Caco-2 (cell line): ENCODE measurements at regions of chr1 and their contacts with region 1.

Region 1: GRCh38 chr1:21200767-21201166 is 24.1 kb upstream of the EIF4G3 start:
- DNase-seq: no peak
- H3K4me3 ChIP-seq: no peak overlapping the region
- H3K4me3 Mint-ChIP-seq: no peak overlapping the region
- H3K27ac Mint-ChIP-seq: no peak overlapping the region
- H3K4me1 ChIP-seq: no peaks in the 10 kb centered on the region
- H3K4me1 Mint-ChIP-seq: no peaks in the 10 kb centered on the region
- H3K27me3 ChIP-seq: no peaks in the 10 kb centered on the region
- H3K27me3 Mint-ChIP-seq: no peaks in the 10 kb centered on the region
- CTCF ChIP-seq: no peak

Region 2: DNA sequence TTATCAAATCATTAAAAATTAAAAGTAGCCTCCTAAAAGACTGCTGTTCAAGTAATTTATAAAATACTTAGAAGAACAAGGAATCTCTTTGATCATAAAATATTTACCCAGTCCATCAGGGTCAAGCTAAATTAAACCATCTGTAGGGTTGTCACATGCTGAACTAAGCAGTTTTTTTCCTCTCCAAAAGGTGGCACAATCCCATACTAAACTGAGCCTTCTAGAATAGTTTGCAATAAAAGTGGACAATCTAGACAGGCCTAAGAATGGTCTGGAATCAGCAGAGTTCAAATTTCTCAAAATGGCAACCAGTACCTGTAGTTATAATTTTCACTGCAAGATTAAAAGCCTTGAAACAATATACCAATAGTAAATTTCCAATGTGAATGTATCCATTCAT is 218.9 kb before region 1 on chr1:
- CTCF ChIA-PET with region 1: interaction called, 4 read pairs
- POLR2A ChIA-PET with region 1: no interaction called
- intact Hi-C with region 1: loop called (anchors 1 kb)
- DNase-seq: peak in 1 of 2 experiments; percentile 9
- H3K4me3 ChIP-seq: no peak overlapping the region
- H3K4me3 Mint-ChIP-seq: no peak overlapping the region
- H3K27ac Mint-ChIP-seq: no peak overlapping the region
- H3K4me1 ChIP-seq: no peaks in the 10 kb centered on the region
- H3K4me1 Mint-ChIP-seq: no peaks in the 10 kb centered on the region
- H3K27me3 ChIP-seq: no peaks in the 10 kb centered on the region
- H3K27me3 Mint-ChIP-seq: no peaks in the 10 kb centered on the region
- CTCF ChIP-seq: peak in 1 of 2 experiments; percentile 40

Region 3: GRCh38 chr1:21077085-21077484 is 123.7 kb before region 1 on chr1:
- CTCF ChIA-PET with region 1: no interaction called
- POLR2A ChIA-PET with region 1: no interaction called
- intact Hi-C with region 1: no loop called
- DNase-seq: no peak
- H3K4me3 ChIP-seq: no peak overlapping the region
- H3K4me3 Mint-ChIP-seq: no peak overlapping the region
- H3K27ac Mint-ChIP-seq: no peak overlapping the region
- H3K4me1 ChIP-seq: no peaks in the 10 kb centered on the region
- H3K4me1 Mint-ChIP-seq: no peaks in the 10 kb centered on the region
- H3K27me3 ChIP-seq: no peaks in the 10 kb centered on the region
- H3K27me3 Mint-ChIP-seq: no peaks in the 10 kb centered on the region
- CTCF ChIP-seq: no peak